Endothelial cell of umbilical vein (primary cell): ENCODE measurements at regions of chr7 and their contacts with region 1.

Region 1: DNA sequence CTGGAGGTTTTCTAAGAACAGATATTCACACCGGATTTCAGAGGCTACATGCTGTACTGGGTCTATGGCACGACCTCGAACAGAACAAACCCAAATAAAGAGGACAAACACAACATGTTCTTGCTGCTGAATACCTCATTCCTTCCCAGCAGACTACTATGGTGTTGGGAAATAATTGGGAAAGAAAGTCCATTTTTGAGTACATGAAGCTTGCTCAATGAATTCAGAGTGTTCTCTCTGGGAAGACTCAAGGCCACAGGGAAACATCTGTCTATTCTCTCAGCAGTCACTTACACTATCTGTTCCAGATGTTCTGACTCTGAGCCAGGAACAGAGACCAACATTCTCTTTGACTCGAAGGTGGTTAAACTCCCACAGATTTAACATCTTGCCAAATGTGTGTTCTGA is 30.9 kb downstream of the LAMB1 start:
- DNase-seq: peak; percentile 29
- H3K4me3 ChIP-seq: no peak overlapping the region
- H3K27ac ChIP-seq: peak overlapping the region; percentile 18
- H3K4me1 ChIP-seq: peaks cover 55% of the 10 kb centered on the region
- H3K27me3 ChIP-seq: no peaks in the 10 kb centered on the region
- CTCF ChIP-seq: no peak
- POLR2A ChIP-seq: no peak

Region 2: DNA sequence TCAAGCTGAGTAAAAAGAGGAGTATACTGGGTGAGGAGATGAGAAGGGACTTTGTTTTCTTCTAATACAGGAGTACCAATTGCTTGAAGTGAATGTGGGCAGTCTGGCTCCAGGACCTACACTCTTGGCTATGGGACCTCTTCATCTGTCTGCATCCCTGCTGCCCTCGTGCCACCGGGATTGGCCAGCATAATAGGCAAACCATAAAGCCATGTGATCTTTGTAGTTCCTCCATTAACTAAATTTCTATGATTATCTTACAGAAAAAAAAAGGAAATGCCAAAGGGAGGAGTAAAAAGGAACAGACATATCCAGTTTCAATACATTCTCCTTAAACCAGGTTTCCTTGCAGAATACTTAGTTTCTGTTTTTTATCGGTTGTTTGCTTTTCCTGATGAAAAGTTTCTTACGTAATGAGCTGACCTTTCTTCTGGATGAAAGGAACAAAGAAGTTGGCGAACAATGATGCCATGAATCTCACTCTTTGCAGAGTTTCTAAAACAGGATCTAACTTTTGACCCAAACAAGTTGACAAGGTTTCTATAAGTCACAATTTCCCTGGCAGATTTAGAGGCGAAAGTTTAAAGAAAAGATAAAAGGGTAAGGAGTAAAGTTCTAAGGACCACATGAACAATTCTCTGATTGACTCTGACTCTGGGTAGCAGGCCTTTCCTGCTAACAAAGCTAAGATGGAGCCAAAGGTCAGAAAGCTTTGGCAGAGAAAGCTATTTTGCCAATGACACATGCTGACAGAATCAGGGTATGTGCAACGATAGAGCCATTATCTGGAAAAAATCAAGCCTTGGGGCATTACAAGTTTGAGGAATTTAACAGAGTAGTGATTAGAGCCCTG is 23.2 kb before region 1 on chr7:
- CTCF ChIA-PET with region 1: interaction called, 3 read pairs
- POLR2A ChIA-PET with region 1: no interaction called
- dilution Hi-C with region 1: no loop called
- intact Hi-C with region 1: loop called (anchors 1 kb)
- DNase-seq: peak; percentile 97
- H3K4me3 ChIP-seq: no peak overlapping the region
- H3K27ac ChIP-seq: peak overlapping the region; percentile 89
- H3K4me1 ChIP-seq: peaks cover 98% of the 10 kb centered on the region
- H3K27me3 ChIP-seq: no peaks in the 10 kb centered on the region
- CTCF ChIP-seq: no peak
- POLR2A ChIP-seq: peak; percentile 59

Region 3: GRCh38 chr7:107982918-107983389 is 10.9 kb after region 1 on chr7:
- CTCF ChIA-PET with region 1: interaction called, 10 read pairs
- POLR2A ChIA-PET with region 1: interaction called, 4 read pairs
- dilution Hi-C with region 1: no loop called
- intact Hi-C with region 1: no loop called
- DNase-seq: no peak
- H3K4me3 ChIP-seq: no peak overlapping the region
- H3K27ac ChIP-seq: no peak overlapping the region
- H3K4me1 ChIP-seq: no peaks in the 10 kb centered on the region
- H3K27me3 ChIP-seq: no peaks in the 10 kb centered on the region
- CTCF ChIP-seq: peak; percentile 25
- POLR2A ChIP-seq: no peak